Calu3 (cell line): ENCODE measurements at regions of chr1 and their contacts with region 1.

Region 1: GRCh38 chr1:9095818-9096217 is 26.4 kb upstream of the SLC2A5 start:
- DNase-seq: no peak
- H3K4me3 Mint-ChIP-seq: no peak overlapping the region
- H3K27ac Mint-ChIP-seq: no peak overlapping the region
- H3K4me1 Mint-ChIP-seq: no peaks in the 10 kb centered on the region
- H3K27me3 Mint-ChIP-seq: no peaks in the 10 kb centered on the region
- CTCF ChIP-seq: no peak

Region 2: DNA sequence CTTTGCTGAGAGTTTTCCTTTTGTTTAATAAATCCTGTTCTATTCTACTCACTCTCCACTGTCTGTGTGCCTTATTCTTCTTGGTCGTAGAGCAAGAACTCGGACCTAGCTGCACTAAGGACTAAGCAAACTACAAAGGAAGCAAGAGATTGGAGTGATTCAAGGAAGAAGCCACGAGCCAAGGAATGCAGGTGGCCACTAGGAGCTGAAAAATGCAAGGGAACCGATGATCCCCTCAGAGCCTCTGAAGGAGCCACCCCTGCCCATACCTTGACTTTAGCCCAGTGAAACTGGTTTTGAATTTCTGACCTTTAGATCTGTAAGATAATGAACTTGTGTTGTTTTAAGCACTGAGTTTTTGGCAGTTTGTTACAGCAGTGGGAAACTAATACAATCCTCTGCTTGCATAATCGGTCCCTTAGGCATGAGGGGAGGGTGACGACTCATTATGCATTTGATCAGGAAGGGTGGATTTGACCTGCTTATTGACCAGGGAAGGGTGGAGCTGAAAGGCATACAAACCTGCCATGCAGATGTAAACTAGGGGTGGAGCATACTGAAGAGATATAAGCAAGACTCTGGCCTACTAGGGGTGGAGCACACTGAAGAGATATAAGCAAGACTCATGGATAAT is 156.3 kb before region 1 on chr1:
- CTCF ChIA-PET with region 1: interaction called, 10 read pairs
- intact Hi-C with region 1: no loop called
- DNase-seq: peak; percentile 23
- H3K4me3 Mint-ChIP-seq: no peak overlapping the region
- H3K27ac Mint-ChIP-seq: peak overlapping the region; percentile 52
- H3K4me1 Mint-ChIP-seq: peaks cover 13% of the 10 kb centered on the region
- H3K27me3 Mint-ChIP-seq: no peaks in the 10 kb centered on the region
- CTCF ChIP-seq: no peak

Region 3: GRCh38 chr1:9166289-9167235 is 70.7 kb after region 1 on chr1:
- CTCF ChIA-PET with region 1: no interaction called
- intact Hi-C with region 1: no loop called
- DNase-seq: no peak
- H3K4me3 Mint-ChIP-seq: no peak overlapping the region
- H3K27ac Mint-ChIP-seq: no peak overlapping the region
- H3K4me1 Mint-ChIP-seq: peaks cover 24% of the 10 kb centered on the region
- H3K27me3 Mint-ChIP-seq: no peaks in the 10 kb centered on the region
- CTCF ChIP-seq: no peak

Region 4: DNA sequence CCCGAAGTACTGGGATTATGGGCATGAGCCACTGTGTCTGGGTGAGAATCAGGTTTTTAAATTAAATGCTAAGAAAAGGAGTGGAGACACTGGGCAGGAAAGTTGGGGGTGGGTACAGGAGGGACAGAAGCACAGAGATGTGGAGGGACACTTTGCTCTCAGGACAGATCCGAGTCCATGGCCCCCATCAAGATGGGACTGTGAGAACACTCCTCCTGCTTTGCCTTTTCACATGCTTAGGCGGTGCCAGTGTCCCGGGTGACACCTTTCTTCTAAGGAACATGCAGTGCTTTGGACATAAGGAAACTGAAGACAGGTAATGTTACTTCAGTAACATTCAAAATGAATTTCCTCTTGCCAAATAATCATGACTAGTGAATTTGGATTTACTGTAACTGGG is 460.1 kb after region 1 on chr1:
- CTCF ChIA-PET with region 1: no interaction called
- intact Hi-C with region 1: no loop called
- DNase-seq: no peak
- H3K4me3 Mint-ChIP-seq: no peak overlapping the region
- H3K27ac Mint-ChIP-seq: no peak overlapping the region
- H3K4me1 Mint-ChIP-seq: peaks cover 7% of the 10 kb centered on the region
- H3K27me3 Mint-ChIP-seq: no peaks in the 10 kb centered on the region
- CTCF ChIP-seq: no peak